HEK293 (cell line): ENCODE measurements at regions of chr11 and their contacts with region 1.

Region 1: GRCh38 chr11:7442588-7443215 is 42.6 kb upstream of the OLFML1 start:
- H3K4me3 ChIP-seq: no peak overlapping the region
- H3K27ac ChIP-seq: no peak overlapping the region
- H3K4me1 ChIP-seq: no peaks in the 10 kb centered on the region
- CTCF ChIP-seq: no peak

Region 2: GRCh38 chr11:7098235-7098832 is 344.4 kb before region 1 on chr11:
- CTCF ChIA-PET with region 1: interaction called, 15 read pairs
- POLR2A ChIA-PET with region 1: no interaction called
- H3K4me3 ChIP-seq: no peak overlapping the region
- H3K27ac ChIP-seq: no peak overlapping the region
- H3K4me1 ChIP-seq: no peaks in the 10 kb centered on the region
- CTCF ChIP-seq: no peak

Region 3: DNA sequence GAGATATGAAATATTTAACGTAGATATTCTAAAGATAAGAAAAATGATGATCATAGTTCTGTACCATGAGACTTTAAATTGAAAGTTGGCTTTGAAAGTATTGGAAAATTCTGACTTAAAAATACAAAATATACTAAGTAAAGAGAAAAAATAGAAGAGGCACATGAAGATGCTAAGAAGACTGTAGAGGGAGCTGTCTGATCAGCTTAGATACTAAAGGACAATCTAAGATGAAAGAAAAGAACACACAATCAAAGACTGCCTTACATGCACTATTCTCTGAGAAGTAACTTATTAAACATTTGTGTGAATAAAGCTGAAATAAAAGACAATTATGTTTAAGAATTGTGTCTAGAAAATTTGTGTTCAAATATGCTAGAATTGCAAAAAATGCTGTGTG is 298.8 kb before region 1 on chr11:
- CTCF ChIA-PET with region 1: interaction called, 21 read pairs
- POLR2A ChIA-PET with region 1: no interaction called
- H3K4me3 ChIP-seq: no peak overlapping the region
- H3K27ac ChIP-seq: no peak overlapping the region
- H3K4me1 ChIP-seq: no peaks in the 10 kb centered on the region
- CTCF ChIP-seq: no peak

Region 4: DNA sequence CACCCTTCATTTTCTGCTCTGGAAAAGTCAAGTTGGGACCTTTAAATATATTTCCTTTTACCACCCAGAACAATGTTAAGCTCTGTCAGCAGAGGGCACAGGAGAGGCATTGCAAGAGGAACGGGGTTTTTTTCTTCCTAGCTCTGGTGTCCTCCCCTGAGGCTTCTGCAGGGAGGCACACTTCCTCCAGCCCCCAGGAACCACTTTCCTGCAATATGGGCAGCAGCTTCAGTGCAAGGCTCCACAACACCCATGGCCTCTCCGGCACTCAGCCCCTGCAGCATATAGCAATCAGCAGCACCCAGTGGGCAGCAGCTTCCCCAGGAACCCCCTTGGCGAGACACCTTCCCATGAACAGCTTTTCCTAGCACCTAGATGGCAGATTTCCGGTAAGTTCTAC is 89.6 kb before region 1 on chr11:
- CTCF ChIA-PET with region 1: interaction called, 38 read pairs
- POLR2A ChIA-PET with region 1: no interaction called
- H3K4me3 ChIP-seq: no peak overlapping the region
- H3K27ac ChIP-seq: no peak overlapping the region
- H3K4me1 ChIP-seq: peaks cover 3% of the 10 kb centered on the region; the same call in 1 of the 2 replicates
- CTCF ChIP-seq: peak; percentile 22; the same call in 1 of the 2 replicates

Region 5: DNA sequence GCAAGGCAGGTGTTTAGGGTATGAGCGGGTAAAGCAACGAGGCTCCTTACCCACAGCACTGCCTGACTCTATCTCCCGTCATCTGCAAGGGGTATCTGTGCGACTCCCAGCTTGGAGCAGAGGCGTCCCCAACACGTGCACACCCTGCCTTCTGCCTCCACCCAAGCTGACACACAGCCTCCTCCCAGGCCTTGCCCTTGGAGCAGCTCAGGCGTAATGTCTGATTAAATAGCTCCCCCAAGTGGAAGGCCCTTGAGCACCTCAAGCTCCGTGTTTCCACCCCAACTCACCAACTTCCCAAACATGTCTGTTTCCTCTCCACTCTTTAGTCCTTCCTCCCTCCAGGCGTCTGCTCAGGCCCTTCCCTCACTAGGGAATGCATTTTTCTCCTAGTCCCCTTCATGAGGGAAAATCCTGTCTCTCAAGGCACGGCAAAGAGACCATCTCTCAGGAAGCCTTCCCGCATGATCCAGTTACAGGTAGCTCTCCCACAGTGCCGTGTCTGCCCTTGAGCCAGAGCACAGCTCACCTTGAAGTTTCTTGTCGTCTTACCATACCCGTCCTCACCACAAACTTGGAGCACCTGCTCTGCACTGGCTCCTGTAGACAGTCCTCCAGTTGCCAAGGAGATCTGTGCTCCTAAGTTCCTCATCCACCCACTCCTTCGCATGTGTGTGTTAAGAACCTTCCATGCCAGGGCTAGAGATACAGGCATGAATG is 214.8 kb after region 1 on chr11:
- CTCF ChIA-PET with region 1: interaction called, 11 read pairs
- POLR2A ChIA-PET with region 1: no interaction called
- H3K4me3 ChIP-seq: no peak overlapping the region
- H3K27ac ChIP-seq: no peak overlapping the region
- H3K4me1 ChIP-seq: no peaks in the 10 kb centered on the region
- CTCF ChIP-seq: peak; percentile 82